ENCODE measurements at regions of chr6 and their contacts with region 1.

Region 1: GRCh38 chr6:144095331-144096002 is at the start of gene SF3B5:
- DNase-seq: peak; percentile 99
- ATAC-seq: peak; percentile 96
- H3K4me3 ChIP-seq: peak within 1 kb of the TSS; percentile 92
- H3K27ac ChIP-seq: peak within 1 kb of the TSS; percentile 81
- H3K4me1 ChIP-seq: peaks cover 15% of the 10 kb centered on the region
- H3K27me3 ChIP-seq: no peaks in the 10 kb centered on the region
- CTCF ChIP-seq: no peak
- EP300 ChIP-seq: no peak
- POLR2A ChIP-seq: peak; percentile 99
- RAD21 ChIP-seq: no peak
- polyA plus RNA-seq, gene SF3B5: 700 to 864 TPM

Region 2: DNA sequence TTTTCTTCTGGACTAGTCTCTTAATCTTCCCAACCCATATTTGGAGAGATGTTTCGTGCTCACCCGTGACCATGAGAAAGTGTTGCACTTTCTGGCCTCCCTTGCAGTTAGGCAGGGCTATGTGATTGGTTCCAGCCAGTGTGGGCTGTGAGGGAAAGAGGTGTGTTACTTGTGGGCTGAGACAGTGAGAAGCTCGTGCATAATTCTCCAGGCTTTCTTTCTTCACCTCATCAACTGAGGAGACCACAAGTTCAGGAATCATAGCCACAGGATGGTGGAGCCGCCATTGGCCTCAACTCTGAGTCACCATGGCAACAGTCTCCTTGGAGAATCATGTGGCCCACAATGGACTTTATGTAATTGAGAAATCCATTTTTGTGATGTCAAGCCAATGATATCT is 526.4 kb before region 1 on chr6:
- CTCF ChIA-PET with region 1: interaction called, 62 read pairs
- POLR2A ChIA-PET with region 1: no interaction called
- RAD21 ChIA-PET with region 1: no interaction called
- SMC1A ChIA-PET with region 1: interaction called, 5 read pairs
- in situ Hi-C with region 1: loop called (anchors 5 kb)
- intact Hi-C with region 1: no loop called
- DNase-seq: no peak
- ATAC-seq: no peak
- H3K4me3 ChIP-seq: no peak overlapping the region
- H3K27ac ChIP-seq: no peak overlapping the region
- H3K4me1 ChIP-seq: peaks cover 4% of the 10 kb centered on the region
- H3K27me3 ChIP-seq: no peaks in the 10 kb centered on the region; a peak in 2 of 4 replicates
- CTCF ChIP-seq: no peak
- EP300 ChIP-seq: no peak
- POLR2A ChIP-seq: no peak
- RAD21 ChIP-seq: no peak

Region 3: DNA sequence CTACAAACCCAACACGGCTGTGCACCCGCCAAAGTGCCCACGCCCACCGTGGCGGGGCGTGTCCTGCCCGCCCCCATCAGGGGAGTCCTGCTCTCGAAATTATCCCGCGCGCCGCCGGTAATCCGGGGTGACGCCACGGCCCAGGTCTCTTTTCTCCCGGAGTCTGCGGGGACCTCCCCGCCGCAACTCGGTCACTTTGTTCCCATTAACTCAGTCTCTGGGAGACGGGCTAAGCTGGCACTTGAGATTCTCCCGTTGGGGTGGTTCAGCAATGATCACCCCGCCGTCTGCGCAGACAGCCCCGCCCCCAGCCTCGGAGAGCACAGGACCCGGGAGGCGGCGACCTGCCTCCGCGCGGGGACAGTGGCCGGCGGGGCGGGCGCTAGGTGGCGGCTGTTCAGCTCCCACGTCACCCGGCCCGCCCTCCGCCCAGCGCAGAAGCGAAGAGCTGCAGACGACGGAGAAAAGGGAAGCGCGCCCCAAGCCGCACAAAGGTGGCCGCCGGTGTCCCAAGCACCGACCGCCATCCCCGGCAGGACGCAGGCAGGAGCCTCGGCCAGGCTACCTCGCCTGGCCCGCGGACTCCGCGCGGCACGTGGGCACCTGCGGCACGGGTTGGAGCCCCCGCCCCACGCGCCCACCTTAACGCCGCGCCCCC is 31.6 kb before region 1 on chr6:
- CTCF ChIA-PET with region 1: interaction called, 6 read pairs
- POLR2A ChIA-PET with region 1: interaction called, 6 read pairs
- RAD21 ChIA-PET with region 1: interaction called, 7 read pairs
- SMC1A ChIA-PET with region 1: interaction called, 10 read pairs
- in situ Hi-C with region 1: no loop called
- intact Hi-C with region 1: loop called (anchors 1 kb)
- DNase-seq: peak; percentile 59
- ATAC-seq: peak; percentile 90
- H3K4me3 ChIP-seq: peak overlapping the region; percentile 85
- H3K27ac ChIP-seq: peak overlapping the region; percentile 94
- H3K4me1 ChIP-seq: peaks cover 10% of the 10 kb centered on the region
- H3K27me3 ChIP-seq: no peaks in the 10 kb centered on the region
- CTCF ChIP-seq: peak; percentile 13 to 41 (median 16); a peak in 3 of 6 replicates
- EP300 ChIP-seq: no peak
- POLR2A ChIP-seq: peak; percentile 97
- RAD21 ChIP-seq: no peak

Region 4: DNA sequence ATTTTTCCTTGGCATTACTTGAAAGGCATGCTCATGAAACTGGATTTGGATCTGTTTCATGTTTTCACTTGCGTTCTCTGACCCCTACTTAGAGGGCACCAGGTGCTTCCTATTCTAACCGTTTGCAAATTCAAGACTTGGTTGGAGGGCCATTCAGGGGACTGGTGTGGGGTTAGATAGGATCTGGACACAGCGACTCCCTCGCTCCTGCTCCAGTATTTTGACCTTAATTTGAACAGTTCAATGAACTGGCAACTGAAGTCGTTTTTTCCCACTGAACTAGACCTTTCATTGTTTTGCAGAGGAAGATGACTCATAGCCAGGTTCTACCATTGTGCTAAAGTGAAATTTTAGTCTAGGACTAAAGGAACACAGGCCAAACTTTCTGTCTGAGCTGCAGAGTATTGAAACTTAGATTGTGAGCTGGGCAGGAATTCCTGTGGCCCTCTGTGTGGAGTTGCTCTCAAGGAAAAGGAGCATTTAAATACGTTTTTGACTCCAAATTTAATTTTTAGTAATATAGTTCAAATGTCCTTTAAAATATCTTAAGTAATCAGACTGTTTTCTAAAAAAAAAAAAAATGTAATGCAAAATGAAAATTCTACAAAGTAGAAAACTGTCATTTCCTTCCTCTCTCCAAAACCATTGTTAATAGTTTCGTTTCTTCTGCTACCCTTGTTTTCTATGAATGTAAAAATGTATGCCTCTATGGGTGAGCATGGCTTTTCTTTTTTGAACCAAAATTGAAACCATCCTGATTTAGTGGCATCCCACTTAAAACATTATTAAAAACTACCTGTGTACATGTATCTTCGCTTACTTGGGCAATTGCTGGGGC is 254.4 kb after region 1 on chr6:
- CTCF ChIA-PET with region 1: no interaction called
- POLR2A ChIA-PET with region 1: no interaction called
- RAD21 ChIA-PET with region 1: no interaction called
- SMC1A ChIA-PET with region 1: no interaction called
- in situ Hi-C with region 1: no loop called
- intact Hi-C with region 1: loop called (anchors 5 kb)
- DNase-seq: peak; percentile 60
- ATAC-seq: peak; percentile 44
- H3K4me3 ChIP-seq: peak overlapping the region; percentile 60
- H3K27ac ChIP-seq: peak overlapping the region; percentile 88
- H3K4me1 ChIP-seq: peaks cover 55% of the 10 kb centered on the region
- H3K27me3 ChIP-seq: no peaks in the 10 kb centered on the region
- CTCF ChIP-seq: no peak
- EP300 ChIP-seq: peak in 1 of 2 experiments; percentile 25; a peak in 1 of 4 replicates
- POLR2A ChIP-seq: no peak; the same call in 1 of the 2 replicates
- RAD21 ChIP-seq: no peak

Measured in GM12878 (cell line).